MCF 10A (cell line): ENCODE measurements at regions of chr3 and their contacts with region 1.

Region 1: GRCh38 chr3:42831321-42831713 is 22.1 kb downstream of the ACKR2 start:
- DNase-seq: peak; percentile 78
- H3K4me3 Mint-ChIP-seq: no peak overlapping the region
- H3K27ac Mint-ChIP-seq: no peak overlapping the region
- H3K4me1 Mint-ChIP-seq: peaks cover 40% of the 10 kb centered on the region
- H3K27me3 Mint-ChIP-seq: no peaks in the 10 kb centered on the region
- CTCF ChIP-seq: peak; percentile 67

Region 2: DNA sequence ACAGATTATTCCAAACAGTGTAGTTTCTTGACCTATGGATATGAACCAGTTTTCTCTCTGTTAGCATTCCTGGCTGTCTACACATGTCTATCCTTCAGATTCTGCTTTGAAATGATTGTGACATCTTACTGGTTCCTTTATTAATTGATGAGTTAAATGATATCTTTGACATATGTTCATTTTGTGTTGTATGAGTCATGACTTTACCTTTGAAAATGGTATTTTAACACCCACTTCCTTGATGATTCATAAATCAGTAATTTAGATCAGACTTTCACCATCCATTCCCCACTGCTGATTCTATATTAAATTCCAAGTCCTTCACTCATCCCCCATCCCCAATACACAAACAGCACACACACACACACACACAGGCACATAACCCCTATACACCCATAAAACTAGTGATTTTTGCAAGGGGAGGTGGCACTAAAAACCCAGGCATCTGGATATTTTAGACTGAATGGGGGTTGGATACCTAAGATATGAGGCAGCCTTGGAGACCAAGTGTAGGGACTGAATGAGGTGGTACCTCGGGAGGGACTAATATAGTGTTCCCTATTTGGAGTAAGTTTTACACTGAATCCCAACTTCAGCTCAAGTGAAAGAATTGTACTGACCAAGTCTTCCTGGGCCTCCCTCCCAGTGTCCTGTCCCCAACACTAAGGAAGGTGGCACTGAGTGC is 575.0 kb before region 1 on chr3:
- CTCF ChIA-PET with region 1: no interaction called
- POLR2A ChIA-PET with region 1: no interaction called
- intact Hi-C with region 1: loop called (anchors 5 kb)
- DNase-seq: peak; percentile 58
- H3K4me3 Mint-ChIP-seq: peak overlapping the region; percentile 22
- H3K27ac Mint-ChIP-seq: peak overlapping the region; percentile 8
- H3K4me1 Mint-ChIP-seq: peaks cover 34% of the 10 kb centered on the region
- H3K27me3 Mint-ChIP-seq: no peaks in the 10 kb centered on the region
- CTCF ChIP-seq: no peak

Region 3: GRCh38 chr3:42381551-42382082 is 449.7 kb before region 1 on chr3:
- CTCF ChIA-PET with region 1: no interaction called
- POLR2A ChIA-PET with region 1: no interaction called
- intact Hi-C with region 1: no loop called
- DNase-seq: no peak
- H3K4me3 Mint-ChIP-seq: no peak overlapping the region
- H3K27ac Mint-ChIP-seq: no peak overlapping the region
- H3K4me1 Mint-ChIP-seq: peaks cover 10% of the 10 kb centered on the region
- H3K27me3 Mint-ChIP-seq: peaks cover 22% of the 10 kb centered on the region
- CTCF ChIP-seq: no peak

Region 4: DNA sequence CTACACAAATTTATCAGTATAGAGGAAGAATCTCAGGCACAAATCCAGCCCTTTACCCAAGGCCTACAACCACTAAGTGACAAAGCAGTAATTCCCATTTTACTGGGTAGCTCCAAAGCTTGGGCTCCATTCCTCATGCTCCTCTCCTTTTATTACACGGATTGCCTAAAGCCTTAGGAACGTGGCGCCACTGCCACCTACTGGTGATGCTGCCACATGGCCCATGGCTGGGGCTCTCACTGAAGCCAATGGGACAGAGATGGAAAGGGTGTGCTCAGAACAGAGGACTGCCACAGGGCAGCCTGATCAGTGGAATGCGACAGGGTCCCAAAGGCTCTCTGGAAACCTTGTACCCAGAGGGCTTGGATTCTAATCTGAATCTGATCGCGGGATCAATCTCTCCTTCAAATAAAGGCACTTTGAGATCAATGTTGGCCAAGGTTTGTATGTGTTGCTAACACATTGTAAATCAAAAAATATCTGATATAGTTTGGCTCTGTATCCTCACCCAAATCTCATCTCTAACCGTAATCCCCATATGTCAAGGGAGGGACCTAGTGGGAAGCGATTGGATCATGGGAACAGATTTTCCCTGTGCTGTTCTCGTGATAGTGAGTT is 387.4 kb before region 1 on chr3:
- CTCF ChIA-PET with region 1: interaction called, 3 read pairs
- POLR2A ChIA-PET with region 1: interaction called, 3 read pairs
- intact Hi-C with region 1: loop called (anchors 2 kb)
- DNase-seq: peak; percentile 83
- H3K4me3 Mint-ChIP-seq: no peak overlapping the region
- H3K27ac Mint-ChIP-seq: no peak overlapping the region
- H3K4me1 Mint-ChIP-seq: no peaks in the 10 kb centered on the region
- H3K27me3 Mint-ChIP-seq: peaks cover 11% of the 10 kb centered on the region
- CTCF ChIP-seq: peak; percentile 97

Region 5: GRCh38 chr3:42581709-42582473 is 249.4 kb before region 1 on chr3 and contains the start of gene SEC22C:
- CTCF ChIA-PET with region 1: interaction called, 3 read pairs
- POLR2A ChIA-PET with region 1: no interaction called
- intact Hi-C with region 1: loop called (anchors 5 kb)
- DNase-seq: peak; percentile 96
- H3K4me3 Mint-ChIP-seq: peak within 1 kb of the TSS; percentile 78
- H3K27ac Mint-ChIP-seq: peak within 1 kb of the TSS; percentile 66
- H3K4me1 Mint-ChIP-seq: peaks cover 29% of the 10 kb centered on the region
- H3K27me3 Mint-ChIP-seq: no peaks in the 10 kb centered on the region
- CTCF ChIP-seq: peak; percentile 20
- total RNA-seq, gene SEC22C: 52.1 and 55.7 TPM in 2 replicates

Region 6: GRCh38 chr3:42804106-42804830 is 27.0 kb before region 1 on chr3 and contains the start of gene HIGD1A:
- CTCF ChIA-PET with region 1: interaction called, 5 read pairs
- POLR2A ChIA-PET with region 1: interaction called, 16 read pairs
- intact Hi-C with region 1: loop called (anchors 5 kb)
- DNase-seq: peak; percentile 97
- H3K4me3 Mint-ChIP-seq: peak within 1 kb of the TSS; percentile 92
- H3K27ac Mint-ChIP-seq: peak within 1 kb of the TSS; percentile 90
- H3K4me1 Mint-ChIP-seq: peaks cover 22% of the 10 kb centered on the region
- H3K27me3 Mint-ChIP-seq: no peaks in the 10 kb centered on the region
- CTCF ChIP-seq: no peak
- total RNA-seq, gene HIGD1A: 140 and 161 TPM in 2 replicates

Region 7: DNA sequence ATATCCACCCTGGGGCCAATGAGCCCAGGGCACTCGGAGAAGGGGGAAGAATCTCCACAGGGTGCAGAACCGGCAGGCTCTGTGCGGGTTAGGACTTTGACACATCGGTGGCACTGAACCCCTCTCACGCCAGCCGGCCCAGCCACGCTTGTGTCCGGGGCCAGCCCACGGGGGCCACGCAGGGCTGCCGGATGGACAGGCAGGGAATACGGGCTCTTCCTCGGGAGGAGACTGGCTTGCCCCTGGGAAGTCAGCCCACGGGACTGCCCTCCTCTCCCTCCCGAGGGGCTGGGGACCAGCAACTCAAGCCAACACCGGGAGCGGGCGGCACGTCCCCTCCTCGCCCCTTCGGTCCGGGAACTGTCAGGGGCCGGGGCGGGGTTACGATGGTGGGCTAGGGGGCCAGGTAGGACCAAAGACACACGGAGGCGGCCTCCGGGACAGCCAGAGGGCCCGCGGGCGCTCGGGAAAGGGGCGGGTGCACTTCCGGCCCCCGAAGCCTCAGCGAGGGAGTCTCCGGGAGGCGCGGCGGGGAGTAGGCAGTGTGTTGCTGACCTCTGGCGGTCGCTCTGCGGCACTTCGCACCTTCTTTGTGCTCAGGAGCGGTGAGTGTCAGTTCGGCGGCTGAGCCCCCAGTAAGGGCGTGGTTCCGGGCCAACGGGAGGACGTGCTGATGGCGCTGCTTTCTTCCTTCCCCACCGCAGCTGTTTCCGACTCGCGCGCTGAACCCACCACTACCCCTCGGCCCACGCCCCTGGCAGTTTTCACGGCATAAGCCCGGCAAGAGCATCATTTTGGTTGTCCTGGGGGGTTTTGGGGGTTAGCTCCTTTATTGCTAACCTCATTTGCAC is 49.5 kb after region 1 on chr3:
- CTCF ChIA-PET with region 1: interaction called, 5 read pairs
- POLR2A ChIA-PET with region 1: no interaction called
- intact Hi-C with region 1: loop called (anchors 1 kb)
- DNase-seq: peak; percentile 74
- H3K4me3 Mint-ChIP-seq: peak overlapping the region; percentile 63
- H3K27ac Mint-ChIP-seq: peak overlapping the region; percentile 21
- H3K4me1 Mint-ChIP-seq: peaks cover 6% of the 10 kb centered on the region
- H3K27me3 Mint-ChIP-seq: peaks cover 12% of the 10 kb centered on the region
- CTCF ChIP-seq: peak; percentile 88